ENCODE measurements at regions of chr2 and their contacts with region 1.

Region 1: GRCh38 chr2:201451292-201452057 is at the starts of genes STRADB and TRAK2:
- DNase-seq: peak; percentile 95
- ATAC-seq: peak; percentile 93
- H3K4me3 ChIP-seq: peak within 1 kb of the TSS; percentile 87 to 100 (median 99)
- H3K27ac ChIP-seq: peak within 1 kb of the TSS; percentile 81
- H3K4me1 ChIP-seq: peaks cover 72% of the 10 kb centered on the region
- H3K27me3 ChIP-seq: no peaks in the 10 kb centered on the region; a peak in 2 of 5 replicates
- CTCF ChIP-seq: peak; percentile 41
- EP300 ChIP-seq: peak; percentile 46 to 55; a peak in 1 of 4 replicates
- POLR2A ChIP-seq: peak; percentile 94 to 97
- RAD21 ChIP-seq: peak; percentile 65; the same call in 1 of the 2 replicates
- total RNA-seq, gene STRADB: 66.6 and 73.8 TPM in 2 replicates
- total RNA-seq, gene TRAK2: 21.0 and 32.4 TPM in 2 replicates

Region 2: DNA sequence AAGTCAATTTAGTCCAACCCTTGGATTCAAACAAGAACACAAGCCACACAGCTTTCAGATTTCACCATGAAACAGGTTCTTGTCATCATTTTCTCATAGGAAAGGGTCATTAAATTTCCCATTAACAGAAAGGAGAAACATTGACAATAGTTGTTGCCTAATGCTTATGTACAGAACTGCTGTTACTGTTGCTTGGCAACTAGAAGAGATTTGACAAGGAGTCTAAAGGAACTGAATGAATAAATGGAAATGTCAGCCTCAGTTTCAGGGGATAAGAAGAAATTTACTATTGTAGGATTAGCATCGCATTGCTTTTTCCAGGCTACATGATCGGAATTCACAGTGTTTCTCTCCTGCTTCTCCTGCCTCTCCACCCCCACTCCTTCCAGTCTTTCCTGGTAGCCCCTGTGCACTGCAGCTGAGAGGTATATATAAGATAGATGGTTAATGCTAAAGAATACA is 1054.7 kb before region 1 on chr2:
- CTCF ChIA-PET with region 1: no interaction called
- POLR2A ChIA-PET with region 1: no interaction called
- in situ Hi-C with region 1: no loop called
- intact Hi-C with region 1: no loop called
- DNase-seq: no peak
- ATAC-seq: no peak
- H3K4me3 ChIP-seq: no peak overlapping the region
- H3K27ac ChIP-seq: no peak overlapping the region
- H3K4me1 ChIP-seq: peaks cover 3% of the 10 kb centered on the region; the same call in 1 of the 2 replicates
- H3K27me3 ChIP-seq: no peaks in the 10 kb centered on the region
- CTCF ChIP-seq: no peak
- EP300 ChIP-seq: no peak
- POLR2A ChIP-seq: no peak
- RAD21 ChIP-seq: no peak

Region 3: GRCh38 chr2:201242571-201243277 is 208.8 kb before region 1 on chr2:
- CTCF ChIA-PET with region 1: no interaction called
- POLR2A ChIA-PET with region 1: no interaction called
- in situ Hi-C with region 1: no loop called
- intact Hi-C with region 1: no loop called
- DNase-seq: no peak
- ATAC-seq: no peak
- H3K4me3 ChIP-seq: no peak overlapping the region
- H3K27ac ChIP-seq: no peak overlapping the region
- H3K4me1 ChIP-seq: 0 out of 2 replicates have a peak, but pooled peaks cover 3% of the 10 kb centered on the region
- H3K27me3 ChIP-seq: no peaks in the 10 kb centered on the region
- CTCF ChIP-seq: no peak
- EP300 ChIP-seq: no peak
- POLR2A ChIP-seq: no peak
- RAD21 ChIP-seq: no peak

Region 4: GRCh38 chr2:201320701-201321100 is 130.8 kb before region 1 on chr2:
- CTCF ChIA-PET with region 1: no interaction called
- POLR2A ChIA-PET with region 1: no interaction called
- in situ Hi-C with region 1: no loop called
- intact Hi-C with region 1: no loop called
- DNase-seq: no peak
- ATAC-seq: peak; percentile 22; the same call in 1 of the 3 replicates
- H3K4me3 ChIP-seq: no peak overlapping the region
- H3K27ac ChIP-seq: no peak overlapping the region
- H3K4me1 ChIP-seq: no peaks in the 10 kb centered on the region
- H3K27me3 ChIP-seq: peaks cover 1 to 3% of the 10 kb centered on the region in 2 experiments; a peak in 3 of 5 replicates
- CTCF ChIP-seq: no peak
- EP300 ChIP-seq: no peak
- POLR2A ChIP-seq: no peak
- RAD21 ChIP-seq: no peak

Region 5: DNA sequence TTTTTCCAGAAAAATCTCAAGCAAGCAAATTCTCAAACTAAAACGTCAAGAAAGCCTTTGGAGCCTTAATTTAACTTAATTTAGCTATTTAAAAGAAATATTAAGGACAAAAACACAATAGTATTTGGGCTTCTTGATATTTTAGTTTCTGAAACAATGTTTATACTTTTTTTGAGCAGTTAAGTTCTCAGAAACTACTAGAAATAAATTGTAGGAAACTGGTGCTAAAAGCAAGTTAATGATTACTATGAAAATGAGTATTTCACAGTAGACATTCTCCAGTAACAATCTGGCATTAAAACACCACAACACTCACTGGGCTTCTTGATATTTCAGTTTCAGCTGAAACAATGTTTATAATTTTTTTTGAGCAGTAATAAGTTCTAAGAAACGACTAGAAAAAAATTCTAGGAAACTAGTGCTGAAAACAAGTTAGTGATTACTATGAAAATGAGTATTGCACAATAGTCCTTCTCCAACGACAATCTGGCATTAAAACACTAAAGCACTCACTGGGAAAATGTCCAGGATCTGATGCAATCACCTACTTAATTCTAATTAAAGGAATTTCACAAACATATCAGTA is 45.3 kb before region 1 on chr2:
- CTCF ChIA-PET with region 1: no interaction called
- POLR2A ChIA-PET with region 1: interaction called, 7 read pairs
- in situ Hi-C with region 1: no loop called
- intact Hi-C with region 1: loop called (anchors 2 kb)
- DNase-seq: peak; percentile 57
- ATAC-seq: no peak
- H3K4me3 ChIP-seq: peak overlapping the region in 1 of 3 experiments; percentile 7; a peak in 2 of 6 replicates
- H3K27ac ChIP-seq: peak overlapping the region; percentile 39
- H3K4me1 ChIP-seq: peaks cover 25% of the 10 kb centered on the region
- H3K27me3 ChIP-seq: no peaks in the 10 kb centered on the region
- CTCF ChIP-seq: no peak
- EP300 ChIP-seq: peak in 1 of 2 experiments; percentile 74; a peak in 1 of 4 replicates
- POLR2A ChIP-seq: no peak
- RAD21 ChIP-seq: no peak

Region 6: DNA sequence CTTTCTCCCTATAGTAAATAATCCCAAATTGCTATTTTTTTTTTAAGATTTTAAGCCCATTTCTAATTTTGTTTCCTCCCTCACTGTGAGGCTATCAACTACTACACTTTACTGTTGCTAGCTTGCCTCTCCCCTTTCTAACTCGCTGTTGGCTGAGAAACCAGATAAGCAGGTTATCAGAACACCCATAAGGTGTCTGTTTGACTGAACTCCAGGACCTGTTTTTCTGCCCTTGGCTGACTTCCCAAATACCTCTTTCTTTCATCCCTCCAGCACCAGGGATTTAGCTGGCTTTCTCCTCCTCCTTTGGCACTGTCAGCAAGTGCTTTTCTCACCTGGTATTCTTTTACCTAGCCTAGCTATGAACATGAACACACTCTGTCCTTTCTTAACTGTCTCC is 11.3 kb before region 1 on chr2:
- CTCF ChIA-PET with region 1: no interaction called
- POLR2A ChIA-PET with region 1: interaction called, 12 read pairs
- in situ Hi-C with region 1: no loop called
- intact Hi-C with region 1: no loop called
- DNase-seq: peak; percentile 77
- ATAC-seq: peak; percentile 94
- H3K4me3 ChIP-seq: no peak overlapping the region
- H3K27ac ChIP-seq: peak overlapping the region; percentile 14
- H3K4me1 ChIP-seq: peaks cover 29% of the 10 kb centered on the region
- H3K27me3 ChIP-seq: no peaks in the 10 kb centered on the region
- CTCF ChIP-seq: no peak
- EP300 ChIP-seq: 0 out of 4 replicates have a peak, but pooled peaks of 1 of the 2 experiments have one; percentile 7
- POLR2A ChIP-seq: no peak
- RAD21 ChIP-seq: no peak

Region 7: DNA sequence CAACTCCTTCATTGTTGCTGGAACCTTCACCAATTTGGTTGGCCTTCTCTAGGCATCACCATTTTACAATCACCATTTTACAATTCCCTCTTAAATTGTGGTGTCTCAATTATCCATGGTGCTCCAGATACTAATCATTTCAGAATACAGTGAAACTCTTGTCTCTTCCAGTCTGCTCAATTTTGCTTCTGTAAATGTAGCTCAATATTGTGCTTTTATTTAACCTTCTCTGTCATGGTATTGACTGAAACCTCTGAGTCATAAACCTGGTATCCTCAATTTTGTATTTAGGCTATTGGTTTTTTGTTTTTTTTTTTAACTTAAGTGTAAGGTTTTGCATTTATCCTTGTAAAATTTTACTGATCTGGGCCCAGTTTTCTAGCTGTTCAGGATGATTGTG is 16.2 kb after region 1 on chr2:
- CTCF ChIA-PET with region 1: no interaction called
- POLR2A ChIA-PET with region 1: interaction called, 11 read pairs
- in situ Hi-C with region 1: no loop called
- intact Hi-C with region 1: no loop called
- DNase-seq: no peak
- ATAC-seq: no peak
- H3K4me3 ChIP-seq: no peak overlapping the region
- H3K27ac ChIP-seq: no peak overlapping the region
- H3K4me1 ChIP-seq: no peaks in the 10 kb centered on the region
- H3K27me3 ChIP-seq: no peaks in the 10 kb centered on the region
- CTCF ChIP-seq: no peak
- EP300 ChIP-seq: no peak
- POLR2A ChIP-seq: no peak
- RAD21 ChIP-seq: no peak

Region 8: GRCh38 chr2:201484805-201485204 is 33.3 kb after region 1 on chr2:
- CTCF ChIA-PET with region 1: no interaction called
- POLR2A ChIA-PET with region 1: no interaction called
- in situ Hi-C with region 1: no loop called
- intact Hi-C with region 1: no loop called
- DNase-seq: no peak
- ATAC-seq: no peak; the same call in 1 of the 3 replicates
- H3K4me3 ChIP-seq: no peak overlapping the region
- H3K27ac ChIP-seq: no peak overlapping the region
- H3K4me1 ChIP-seq: no peaks in the 10 kb centered on the region
- H3K27me3 ChIP-seq: no peaks in the 10 kb centered on the region
- CTCF ChIP-seq: no peak
- EP300 ChIP-seq: no peak
- POLR2A ChIP-seq: no peak
- RAD21 ChIP-seq: no peak

Region 9: GRCh38 chr2:201642579-201643215 is 191.2 kb after region 1 on chr2:
- CTCF ChIA-PET with region 1: no interaction called
- POLR2A ChIA-PET with region 1: interaction called, 4 read pairs
- in situ Hi-C with region 1: no loop called
- intact Hi-C with region 1: loop called (anchors 5 kb)
- DNase-seq: peak; percentile 68
- ATAC-seq: peak; percentile 96
- H3K4me3 ChIP-seq: peak overlapping the region; percentile 82 to 98 (median 85)
- H3K27ac ChIP-seq: peak overlapping the region; percentile 68
- H3K4me1 ChIP-seq: peaks cover 18% of the 10 kb centered on the region
- H3K27me3 ChIP-seq: peaks cover 0 to 1% of the 10 kb centered on the region in 2 experiments; a peak in 1 of 5 replicates
- CTCF ChIP-seq: peak; percentile 19; the same call in 1 of the 2 replicates
- EP300 ChIP-seq: 0 out of 4 replicates have a peak, but pooled peaks of 1 of the 2 experiments have one; percentile 8
- POLR2A ChIP-seq: peak; percentile 88 to 90
- RAD21 ChIP-seq: peak; percentile 39